Naive thymus-derived CD4-positive, alpha-beta T cell (primary cell): ENCODE measurements at regions of chr15 and their contacts with region 1.

Region 1: GRCh38 chr15:63195569-63196015 is 6.2 kb downstream of the RAB8B start:
- DNase-seq: no peak
- ATAC-seq: no peak
- H3K4me3 ChIP-seq: peak overlapping the region; percentile 25
- H3K4me3 Mint-ChIP-seq: peak overlapping the region; percentile 70 to 99 (median 78)
- H3K27ac ChIP-seq: peak overlapping the region; percentile 99
- H3K27ac Mint-ChIP-seq: peak overlapping the region; percentile 76 to 98 (median 94)
- H3K4me1 ChIP-seq: peaks cover 78 to 89% of the 10 kb centered on the region in 2 donors
- H3K4me1 Mint-ChIP-seq: peaks cover 75 to 100% (median 93%) of the 10 kb centered on the region in 7 donors
- H3K27me3 ChIP-seq: no peaks in the 10 kb centered on the region
- H3K27me3 Mint-ChIP-seq: no peaks in the 10 kb centered on the region

Region 2: DNA sequence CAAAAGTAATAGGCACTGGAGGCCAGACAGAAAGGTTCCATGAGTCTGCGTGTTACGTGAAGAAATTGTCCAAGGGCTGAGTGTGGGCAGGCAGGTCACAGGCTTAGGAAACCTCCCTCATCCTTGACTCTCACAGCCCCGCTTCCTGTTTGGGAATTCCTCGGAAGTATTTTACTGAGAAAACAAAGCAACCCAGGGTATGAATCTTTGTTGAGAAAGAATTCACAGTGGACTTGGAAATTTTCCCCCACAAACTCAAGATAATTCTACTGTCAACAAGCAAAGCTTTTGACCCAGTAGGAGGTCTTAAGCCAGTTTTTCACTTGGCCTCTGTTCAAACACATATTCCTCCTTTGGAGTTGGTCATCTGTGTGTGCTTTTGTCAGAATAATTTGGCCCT is 530.1 kb before region 1 on chr15:
- CTCF ChIA-PET with region 1: no interaction called
- POLR2A ChIA-PET with region 1: no interaction called
- intact Hi-C with region 1: no loop called
- DNase-seq: no peak
- ATAC-seq: no peak
- H3K4me3 ChIP-seq: no peak overlapping the region
- H3K4me3 Mint-ChIP-seq: no peak overlapping the region
- H3K27ac ChIP-seq: no peak overlapping the region
- H3K27ac Mint-ChIP-seq: no peak overlapping the region
- H3K4me1 ChIP-seq: no peaks in the 10 kb centered on the region
- H3K4me1 Mint-ChIP-seq: no peaks in the 10 kb centered on the region
- H3K27me3 ChIP-seq: no peaks in the 10 kb centered on the region
- H3K27me3 Mint-ChIP-seq: peaks cover 0 to 9% (median 0%) of the 10 kb centered on the region in 5 donors

Region 3: GRCh38 chr15:63212050-63213004 is 16.7 kb after region 1 on chr15:
- CTCF ChIA-PET with region 1: interaction called, 4 read pairs
- POLR2A ChIA-PET with region 1: interaction called, 17 read pairs
- intact Hi-C with region 1: loop called (anchors 1 kb)
- DNase-seq: no peak
- ATAC-seq: peak; percentile 60
- H3K4me3 ChIP-seq: no peak overlapping the region
- H3K4me3 Mint-ChIP-seq: peak overlapping the region in 9 of 10 donors; percentile 22 to 78 (median 58)
- H3K27ac ChIP-seq: no peak overlapping the region
- H3K27ac Mint-ChIP-seq: peak overlapping the region; percentile 0 to 91 (median 77)
- H3K4me1 ChIP-seq: peaks cover 46 to 52% of the 10 kb centered on the region in 2 donors
- H3K4me1 Mint-ChIP-seq: peaks cover 59 to 92% (median 82%) of the 10 kb centered on the region in 7 donors
- H3K27me3 ChIP-seq: no peaks in the 10 kb centered on the region
- H3K27me3 Mint-ChIP-seq: no peaks in the 10 kb centered on the region

Region 4: GRCh38 chr15:63218100-63218808 is 22.7 kb after region 1 on chr15:
- CTCF ChIA-PET with region 1: interaction called, 3 read pairs
- POLR2A ChIA-PET with region 1: interaction called, 17 read pairs
- intact Hi-C with region 1: no loop called
- DNase-seq: no peak
- ATAC-seq: no peak
- H3K4me3 ChIP-seq: no peak overlapping the region
- H3K4me3 Mint-ChIP-seq: peak overlapping the region in 2 of 10 donors; percentile 9 to 60
- H3K27ac ChIP-seq: no peak overlapping the region
- H3K27ac Mint-ChIP-seq: peak overlapping the region in 7 of 9 donors; percentile 6 to 75 (median 60)
- H3K4me1 ChIP-seq: peaks cover 5 to 17% of the 10 kb centered on the region in 2 donors
- H3K4me1 Mint-ChIP-seq: peaks cover 34 to 81% (median 71%) of the 10 kb centered on the region in 7 donors
- H3K27me3 ChIP-seq: no peaks in the 10 kb centered on the region
- H3K27me3 Mint-ChIP-seq: no peaks in the 10 kb centered on the region

Region 5: GRCh38 chr15:63232405-63232804 is 36.8 kb after region 1 on chr15:
- CTCF ChIA-PET with region 1: interaction called, 8 read pairs
- POLR2A ChIA-PET with region 1: interaction called, 18 read pairs
- intact Hi-C with region 1: loop called (anchors 1 to 2 kb)
- DNase-seq: peak in 7 of 9 donors; percentile 21 to 55 (median 40)
- ATAC-seq: peak; percentile 78
- H3K4me3 ChIP-seq: no peak overlapping the region
- H3K4me3 Mint-ChIP-seq: peak overlapping the region in 9 of 10 donors; percentile 1 to 73 (median 59)
- H3K27ac ChIP-seq: peak overlapping the region; percentile 52
- H3K27ac Mint-ChIP-seq: peak overlapping the region; percentile 70 to 92 (median 86)
- H3K4me1 ChIP-seq: peaks cover 13 to 32% of the 10 kb centered on the region in 2 donors
- H3K4me1 Mint-ChIP-seq: peaks cover 22 to 91% (median 86%) of the 10 kb centered on the region in 7 donors
- H3K27me3 ChIP-seq: no peaks in the 10 kb centered on the region
- H3K27me3 Mint-ChIP-seq: no peaks in the 10 kb centered on the region

Region 6: DNA sequence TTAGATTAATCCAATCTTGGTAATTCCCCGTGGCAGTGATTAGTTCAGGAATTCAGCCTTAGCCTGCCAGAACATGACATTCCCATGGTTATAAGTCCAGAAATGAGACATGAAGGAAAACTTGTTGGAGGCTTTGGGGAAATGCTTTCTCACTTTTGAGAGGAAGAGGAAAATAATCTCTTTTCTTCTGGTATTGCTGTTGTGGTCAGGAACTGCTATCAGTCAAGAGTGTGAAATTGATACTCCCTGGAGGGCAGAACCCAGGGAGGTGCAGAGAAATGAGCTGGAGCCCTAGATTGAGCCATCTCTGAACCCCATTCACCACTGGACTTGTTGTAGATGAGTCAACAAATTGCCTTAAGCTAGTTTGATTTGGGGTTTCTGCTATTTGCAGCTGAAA is 43.2 kb after region 1 on chr15:
- CTCF ChIA-PET with region 1: interaction called, 4 read pairs
- POLR2A ChIA-PET with region 1: interaction called, 8 read pairs
- intact Hi-C with region 1: loop called in 1 of 2 experiments (anchors 2 kb)
- DNase-seq: no peak
- ATAC-seq: peak; percentile 46
- H3K4me3 ChIP-seq: no peak overlapping the region
- H3K4me3 Mint-ChIP-seq: no peak overlapping the region
- H3K27ac ChIP-seq: no peak overlapping the region
- H3K27ac Mint-ChIP-seq: peak overlapping the region in 1 of 9 donors; percentile 59
- H3K4me1 ChIP-seq: peaks cover 19 to 35% of the 10 kb centered on the region in 2 donors
- H3K4me1 Mint-ChIP-seq: peaks cover 44 to 90% (median 74%) of the 10 kb centered on the region in 7 donors
- H3K27me3 ChIP-seq: no peaks in the 10 kb centered on the region
- H3K27me3 Mint-ChIP-seq: no peaks in the 10 kb centered on the region